ENCODE measurements at regions of chr1 and their contacts with region 1.

Region 1: GRCh38 chr1:54488779-54489626 is 59.0 kb upstream of the ACOT11 start:
- DNase-seq: peak; percentile 82
- ATAC-seq: peak; percentile 70
- H3K4me3 Mint-ChIP-seq: peak overlapping the region; percentile 89
- H3K27ac Mint-ChIP-seq: peak overlapping the region; percentile 70
- H3K4me1 Mint-ChIP-seq: peaks cover 26% of the 10 kb centered on the region
- H3K27me3 Mint-ChIP-seq: peaks cover 12% of the 10 kb centered on the region
- CTCF ChIP-seq: no peak

Region 2: DNA sequence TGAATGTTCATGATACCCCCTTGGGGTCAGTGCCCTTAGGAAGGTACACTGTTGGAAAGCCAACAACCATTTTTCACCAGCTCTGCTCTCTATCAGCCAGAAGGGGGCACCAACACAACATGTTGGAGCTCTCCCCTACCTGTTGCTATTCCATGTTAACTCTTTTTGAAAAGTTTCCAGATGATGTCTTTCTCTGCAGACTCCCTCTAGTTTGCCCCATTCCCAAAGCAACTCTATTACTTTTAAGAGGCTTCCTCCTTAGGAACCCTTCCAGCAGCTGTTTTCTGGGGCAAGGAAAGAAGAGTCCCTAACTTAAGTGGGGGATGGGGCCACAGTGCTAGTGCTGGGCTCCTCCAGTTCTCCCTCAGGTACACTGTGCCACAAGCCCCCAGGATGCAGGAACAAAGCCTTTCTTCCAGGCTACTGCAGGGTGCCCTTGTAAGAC is 628.0 kb before region 1 on chr1:
- CTCF ChIA-PET with region 1: interaction called, 7 read pairs
- POLR2A ChIA-PET with region 1: no interaction called
- intact Hi-C with region 1: loop called (anchors 1 kb)
- DNase-seq: no peak
- ATAC-seq: peak; percentile 68
- H3K4me3 Mint-ChIP-seq: no peak overlapping the region
- H3K27ac Mint-ChIP-seq: no peak overlapping the region
- H3K4me1 Mint-ChIP-seq: peaks cover 25% of the 10 kb centered on the region
- H3K27me3 Mint-ChIP-seq: no peaks in the 10 kb centered on the region
- CTCF ChIP-seq: peak; percentile 42

Region 3: GRCh38 chr1:53945433-53946251 is 543.4 kb before region 1 on chr1 and contains the start of gene IFT25:
- CTCF ChIA-PET with region 1: no interaction called
- POLR2A ChIA-PET with region 1: no interaction called
- intact Hi-C with region 1: loop called (anchors 1 kb)
- DNase-seq: peak; percentile 100
- ATAC-seq: peak; percentile 81
- H3K4me3 Mint-ChIP-seq: peak within 1 kb of the TSS; percentile 98
- H3K27ac Mint-ChIP-seq: peak within 1 kb of the TSS; percentile 92
- H3K4me1 Mint-ChIP-seq: peaks cover 37% of the 10 kb centered on the region
- H3K27me3 Mint-ChIP-seq: no peaks in the 10 kb centered on the region
- CTCF ChIP-seq: no peak
- total RNA-seq, gene IFT25: 38.0 and 41.0 TPM in 2 replicates

Region 4: GRCh38 chr1:54070171-54070837 is 418.7 kb before region 1 on chr1:
- CTCF ChIA-PET with region 1: interaction called, 29 read pairs
- POLR2A ChIA-PET with region 1: interaction called, 4 read pairs
- intact Hi-C with region 1: loop called (anchors 1 kb)
- DNase-seq: no peak
- ATAC-seq: peak; percentile 95
- H3K4me3 Mint-ChIP-seq: no peak overlapping the region
- H3K27ac Mint-ChIP-seq: no peak overlapping the region
- H3K4me1 Mint-ChIP-seq: no peaks in the 10 kb centered on the region
- H3K27me3 Mint-ChIP-seq: no peaks in the 10 kb centered on the region
- CTCF ChIP-seq: peak; percentile 88

Region 5: GRCh38 chr1:54180701-54181360 is 308.2 kb before region 1 on chr1:
- CTCF ChIA-PET with region 1: interaction called, 15 read pairs
- POLR2A ChIA-PET with region 1: no interaction called
- intact Hi-C with region 1: no loop called
- DNase-seq: no peak
- ATAC-seq: no peak
- H3K4me3 Mint-ChIP-seq: no peak overlapping the region
- H3K27ac Mint-ChIP-seq: no peak overlapping the region
- H3K4me1 Mint-ChIP-seq: no peaks in the 10 kb centered on the region
- H3K27me3 Mint-ChIP-seq: no peaks in the 10 kb centered on the region
- CTCF ChIP-seq: no peak

Region 6: GRCh38 chr1:54310439-54311328 is 178.3 kb before region 1 on chr1:
- CTCF ChIA-PET with region 1: interaction called, 3 read pairs
- POLR2A ChIA-PET with region 1: interaction called, 5 read pairs
- intact Hi-C with region 1: loop called (anchors 1 kb)
- DNase-seq: no peak
- ATAC-seq: peak; percentile 34
- H3K4me3 Mint-ChIP-seq: no peak overlapping the region
- H3K27ac Mint-ChIP-seq: no peak overlapping the region
- H3K4me1 Mint-ChIP-seq: no peaks in the 10 kb centered on the region
- H3K27me3 Mint-ChIP-seq: no peaks in the 10 kb centered on the region
- CTCF ChIP-seq: no peak

Region 7: DNA sequence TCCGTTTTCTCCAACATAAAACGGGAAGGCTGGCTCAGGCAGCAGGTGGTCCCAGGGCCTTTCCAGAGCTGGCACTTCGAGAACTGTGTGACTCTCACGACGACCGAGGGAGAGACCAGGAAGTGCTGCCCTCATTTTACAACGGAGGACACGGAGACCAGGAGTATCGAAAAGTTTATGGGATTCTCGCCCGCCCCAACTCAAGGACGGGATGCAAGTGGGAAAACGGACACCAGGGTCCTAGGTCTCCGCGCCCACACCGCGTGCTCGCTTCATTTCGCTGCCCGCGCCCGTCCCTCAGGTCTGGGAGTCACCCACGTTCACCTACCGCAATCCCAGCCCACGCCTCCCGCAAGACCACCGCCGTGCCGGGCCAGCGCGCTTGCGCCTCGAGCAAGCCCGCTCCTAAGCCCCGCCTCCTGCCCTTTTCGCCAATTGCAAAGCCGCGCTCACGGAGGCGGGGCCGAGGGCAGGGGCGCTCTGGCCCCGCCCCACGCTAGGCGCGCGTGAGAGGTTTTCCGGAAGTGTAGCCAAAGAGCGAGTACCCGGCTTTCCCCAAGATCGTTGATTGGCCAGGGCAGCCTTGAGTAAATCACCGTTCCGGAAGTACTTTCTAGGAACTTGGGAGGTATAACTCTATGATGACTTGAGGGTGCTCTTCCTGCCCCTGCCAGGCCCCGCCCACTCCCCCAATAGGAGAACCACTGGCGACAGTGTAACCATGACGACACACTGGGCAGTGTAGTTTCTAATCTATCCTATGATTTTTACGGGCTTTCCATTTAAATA is 275.3 kb after region 1 on chr1 and contains the start of gene PARS2:
- CTCF ChIA-PET with region 1: no interaction called
- POLR2A ChIA-PET with region 1: interaction called, 4 read pairs
- intact Hi-C with region 1: loop called (anchors 1 kb)
- DNase-seq: peak; percentile 91
- ATAC-seq: peak; percentile 92
- H3K4me3 Mint-ChIP-seq: peak within 1 kb of the TSS; percentile 90
- H3K27ac Mint-ChIP-seq: peak within 1 kb of the TSS; percentile 89
- H3K4me1 Mint-ChIP-seq: peaks cover 24% of the 10 kb centered on the region
- H3K27me3 Mint-ChIP-seq: no peaks in the 10 kb centered on the region
- CTCF ChIP-seq: no peak
- total RNA-seq, gene PARS2: 4.3 and 4.8 TPM in 2 replicates